GM23248 (cell line): ENCODE measurements at regions of chr20 and their contacts with region 1.

Region 1: GRCh38 chr20:20360464-20360863 is 7.4 kb upstream of the INSM1 start:
- DNase-seq: peak; percentile 78
- H3K4me3 ChIP-seq: no peak overlapping the region
- H3K27ac ChIP-seq: no peak overlapping the region
- H3K4me1 ChIP-seq: no peaks in the 10 kb centered on the region
- H3K27me3 ChIP-seq: peaks cover 47% of the 10 kb centered on the region

Region 2: GRCh38 chr20:20549718-20550117 is 189.3 kb after region 1 on chr20:
- in situ Hi-C with region 1: loop called (anchors 10 kb)
- DNase-seq: peak; percentile 91
- H3K4me3 ChIP-seq: no peak overlapping the region
- H3K27ac ChIP-seq: peak overlapping the region; percentile 42; the same call in 1 of the 2 replicates
- H3K4me1 ChIP-seq: peaks cover 10% of the 10 kb centered on the region
- H3K27me3 ChIP-seq: no peaks in the 10 kb centered on the region

Region 3: GRCh38 chr20:20568604-20569205 is 208.2 kb after region 1 on chr20:
- in situ Hi-C with region 1: no loop called
- DNase-seq: peak; percentile 74
- H3K4me3 ChIP-seq: no peak overlapping the region
- H3K27ac ChIP-seq: no peak overlapping the region
- H3K4me1 ChIP-seq: no peaks in the 10 kb centered on the region
- H3K27me3 ChIP-seq: no peaks in the 10 kb centered on the region

Region 4: DNA sequence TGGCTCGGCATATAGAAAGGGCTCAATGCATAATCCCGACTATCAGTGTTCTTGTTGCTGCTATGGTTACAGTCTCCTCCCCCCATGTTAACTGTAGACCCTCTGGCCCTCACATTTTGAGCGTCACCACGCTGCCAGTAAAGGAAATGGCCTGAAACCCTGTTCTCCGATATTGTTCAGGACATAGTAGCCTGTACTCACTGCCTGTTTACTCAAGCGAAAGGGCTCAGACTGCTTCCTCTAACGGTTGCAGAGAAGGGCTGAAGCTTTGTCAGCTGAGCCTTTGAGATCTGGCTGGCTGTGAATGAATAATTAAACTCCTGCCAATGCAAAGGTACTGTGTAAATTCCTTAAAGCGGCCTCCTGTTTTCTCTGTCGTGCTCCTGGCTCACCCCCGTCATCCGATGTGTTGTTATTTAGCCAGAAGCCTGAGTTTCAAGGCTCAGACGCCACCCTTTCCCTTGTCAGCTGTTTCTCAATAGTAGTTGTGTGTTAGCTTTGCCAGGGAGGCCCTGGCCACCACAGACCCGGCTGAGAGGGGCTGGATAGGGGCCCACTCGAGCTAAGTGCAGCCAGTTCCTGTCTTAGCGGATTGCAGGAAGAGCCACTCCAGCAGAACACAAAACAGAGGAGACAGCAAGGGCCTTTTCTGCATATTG is 383.2 kb after region 1 on chr20:
- in situ Hi-C with region 1: no loop called
- DNase-seq: no peak
- H3K4me3 ChIP-seq: no peak overlapping the region
- H3K27ac ChIP-seq: no peak overlapping the region
- H3K4me1 ChIP-seq: no peaks in the 10 kb centered on the region
- H3K27me3 ChIP-seq: no peaks in the 10 kb centered on the region